Heart left ventricle (tissue), 16 donors: ENCODE measurements at regions of chr4 and their contacts with region 1.

Region 1: DNA sequence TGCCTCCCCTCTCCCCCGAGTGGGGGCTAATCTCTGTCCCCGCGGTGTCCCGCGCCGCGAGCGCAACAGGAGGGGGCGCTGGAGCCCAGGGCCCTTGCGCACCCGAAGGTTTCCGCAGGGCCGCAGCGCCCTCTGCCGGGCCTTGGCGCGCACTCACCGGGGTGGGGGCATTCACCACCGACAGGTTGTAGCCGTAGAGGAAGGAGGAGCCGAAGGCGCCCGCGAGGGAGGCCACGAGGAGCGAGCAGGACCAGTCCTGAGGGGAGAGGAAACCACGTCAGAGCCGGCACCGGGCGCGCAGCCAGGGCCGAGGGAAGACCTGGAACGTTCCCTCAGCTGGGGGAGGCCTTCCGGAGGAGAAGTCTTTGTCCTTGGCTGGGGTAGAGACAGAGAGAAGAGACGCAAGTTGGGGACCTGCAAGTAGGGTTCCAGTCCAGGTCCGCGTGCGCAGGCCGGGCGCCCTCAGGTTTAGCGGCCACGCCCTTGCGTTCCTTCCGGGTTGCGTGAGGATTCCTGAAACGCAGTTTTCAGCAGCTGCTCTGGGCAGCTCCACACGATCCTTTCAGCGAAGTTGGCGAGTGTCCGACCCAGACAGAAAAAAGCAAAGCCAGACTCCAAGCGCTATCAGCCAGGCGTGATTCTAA is 2.4 kb downstream of the SLC2A9 start:
- DNase-seq: peak; percentile 99
- ATAC-seq: peak; percentile 93 to 96 (median 96)
- H3K4me3 ChIP-seq: peak overlapping the region in 10 of 12 donors; percentile 38 to 61 (median 50)
- H3K27ac ChIP-seq: peak overlapping the region; percentile 84 to 95 (median 93)
- H3K4me1 ChIP-seq: peaks cover 5 to 57% (median 39%) of the 10 kb centered on the region in 12 donors
- H3K27me3 ChIP-seq: no peaks in the 10 kb centered on the region
- CTCF ChIP-seq: peak; percentile 96 to 100 (median 99)
- POLR2A ChIP-seq: peak; percentile 7 to 60

Region 2: DNA sequence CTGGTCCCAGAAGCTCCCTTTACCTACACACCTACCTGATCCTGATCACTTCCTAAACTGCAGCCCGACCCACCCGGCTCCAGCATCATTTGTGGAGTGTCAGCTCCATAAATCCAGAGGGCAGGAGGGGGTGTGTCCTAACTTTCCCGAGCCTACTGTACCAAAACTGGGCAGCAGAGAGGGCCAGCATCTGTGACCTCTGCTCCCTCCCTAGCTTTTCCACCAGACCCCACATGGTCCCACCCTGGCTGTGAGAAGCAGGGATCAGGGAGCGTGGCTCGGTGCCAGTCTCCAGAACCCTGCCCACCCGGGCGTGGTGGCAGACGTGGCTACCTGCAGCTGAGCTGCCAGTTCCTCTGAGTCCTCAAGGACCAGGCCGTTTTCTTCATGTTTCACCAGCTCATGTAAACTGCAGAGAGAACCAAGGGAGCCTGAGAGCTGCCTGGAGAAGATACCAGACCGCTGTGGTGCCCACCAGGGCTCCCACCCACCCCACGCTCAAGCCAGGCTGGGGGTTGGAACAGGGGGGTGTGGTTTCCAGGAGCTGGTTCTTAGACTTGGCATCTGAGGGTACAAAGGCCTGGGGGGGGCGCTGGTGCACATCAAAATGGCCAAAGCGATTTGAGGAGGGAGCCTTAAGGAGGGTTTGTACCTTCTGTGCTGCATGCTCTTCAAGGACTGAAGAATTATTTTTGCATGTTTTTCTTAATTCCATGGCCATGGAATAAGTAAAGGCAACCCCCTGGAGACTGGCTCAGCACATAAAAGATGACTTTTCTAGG is 314.2 kb before region 1 on chr4:
- intact Hi-C with region 1: loop called in 5 of 10 experiments (anchors 5 to 10 kb)
- DNase-seq: no peak
- ATAC-seq: no peak
- H3K4me3 ChIP-seq: no peak overlapping the region
- H3K27ac ChIP-seq: no peak overlapping the region
- H3K4me1 ChIP-seq: no peaks in the 10 kb centered on the region
- H3K27me3 ChIP-seq: peaks cover 0 to 4% (median 0%) of the 10 kb centered on the region in 9 donors
- CTCF ChIP-seq: no peak
- POLR2A ChIP-seq: no peak

Region 3: DNA sequence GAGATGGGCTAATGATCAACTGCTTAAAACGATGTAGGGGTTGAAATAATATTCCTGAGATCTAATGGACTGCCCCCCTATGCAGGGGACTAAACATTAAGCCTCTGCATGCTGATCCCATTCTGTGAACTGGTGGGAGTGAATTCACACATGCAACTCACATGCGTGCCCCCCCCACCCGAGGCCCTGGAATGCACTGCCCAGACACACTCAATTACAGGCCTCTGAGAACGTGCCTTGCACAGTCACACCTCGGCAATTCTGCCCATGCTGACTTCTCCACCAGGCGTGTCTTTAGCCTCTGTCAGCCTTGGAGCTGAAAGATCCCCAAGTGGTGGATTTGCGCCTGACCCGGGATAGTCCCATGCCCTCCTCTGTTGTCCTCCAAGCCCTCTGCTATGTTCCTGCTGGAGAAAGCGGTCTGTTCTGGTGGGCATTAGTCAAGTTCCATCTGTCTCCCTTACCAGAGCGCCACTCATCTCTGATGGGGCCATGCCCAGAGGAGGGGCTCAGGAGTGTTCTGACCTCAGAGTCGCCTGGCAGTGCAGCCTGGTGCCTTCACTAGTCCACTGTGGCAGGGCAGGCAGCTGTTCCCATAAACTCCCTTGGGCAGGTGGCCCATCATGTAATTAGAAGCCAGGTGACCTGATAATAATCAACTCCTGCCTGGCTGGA is 151.1 kb before region 1 on chr4:
- intact Hi-C with region 1: no loop called
- DNase-seq: no peak
- ATAC-seq: peak in 1 of 4 donors; percentile 27
- H3K4me3 ChIP-seq: no peak overlapping the region
- H3K27ac ChIP-seq: no peak overlapping the region
- H3K4me1 ChIP-seq: no peaks in the 10 kb centered on the region
- H3K27me3 ChIP-seq: no peaks in the 10 kb centered on the region
- CTCF ChIP-seq: no peak
- POLR2A ChIP-seq: no peak

Region 4: GRCh38 chr4:9904976-9905587 is 113.9 kb before region 1 on chr4:
- intact Hi-C with region 1: loop called in 1 of 10 experiments (anchors 10 kb)
- DNase-seq: peak in 1 of 5 donors; percentile 58
- ATAC-seq: peak; percentile 10 to 59 (median 36)
- H3K4me3 ChIP-seq: no peak overlapping the region
- H3K27ac ChIP-seq: no peak overlapping the region
- H3K4me1 ChIP-seq: peaks cover 0 to 11% (median 0%) of the 10 kb centered on the region in 12 donors
- H3K27me3 ChIP-seq: no peaks in the 10 kb centered on the region
- CTCF ChIP-seq: no peak
- POLR2A ChIP-seq: no peak

Region 5: GRCh38 chr4:10063544-10064300 is 44.8 kb after region 1 on chr4:
- intact Hi-C with region 1: loop called (anchors 1 to 5 kb)
- DNase-seq: peak; percentile 68 to 78 (median 69)
- ATAC-seq: peak; percentile 93 to 99 (median 98)
- H3K4me3 ChIP-seq: no peak overlapping the region
- H3K27ac ChIP-seq: peak overlapping the region in 6 of 12 donors; percentile 25 to 59 (median 48)
- H3K4me1 ChIP-seq: peaks cover 0 to 17% (median 9%) of the 10 kb centered on the region in 12 donors
- H3K27me3 ChIP-seq: no peaks in the 10 kb centered on the region
- CTCF ChIP-seq: peak; percentile 67 to 86 (median 78)
- POLR2A ChIP-seq: no peak

Region 6: DNA sequence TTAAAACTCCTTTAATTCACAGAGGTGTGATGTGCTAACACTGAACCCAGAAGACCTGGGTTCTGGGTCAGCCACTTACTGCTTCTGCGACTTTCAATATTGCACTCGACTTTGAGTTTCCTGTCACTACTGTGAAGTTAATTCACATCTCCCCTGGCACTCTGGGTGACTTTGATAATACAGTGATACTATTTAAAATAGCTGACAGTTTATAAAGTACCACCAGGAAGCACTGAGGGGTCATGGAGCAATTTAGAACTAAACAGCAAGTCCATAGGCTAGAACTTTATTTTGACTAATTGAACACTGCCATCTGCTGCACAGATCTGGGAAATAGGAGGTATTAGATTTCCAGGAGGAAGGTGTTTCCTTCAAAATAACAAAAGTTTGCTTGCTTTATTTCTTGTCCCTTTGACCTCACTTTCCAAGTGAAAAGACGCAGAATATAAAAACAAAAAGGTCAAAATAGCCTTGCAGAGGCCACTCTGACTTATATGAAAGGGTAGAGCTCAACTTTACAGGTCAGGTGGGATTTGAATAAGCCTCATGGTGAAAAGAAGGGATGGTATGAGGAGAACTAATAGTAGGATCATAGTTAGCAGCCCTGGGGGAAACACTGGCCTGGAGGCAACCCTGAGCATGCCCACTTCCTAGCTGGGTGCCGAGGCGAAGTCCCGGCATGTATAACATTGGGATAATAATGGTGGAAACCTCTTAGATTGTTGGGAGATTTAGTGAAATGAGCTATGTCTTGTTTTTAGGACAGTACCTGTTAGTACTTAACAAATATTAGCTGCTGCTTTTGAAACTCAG is 384.9 kb after region 1 on chr4:
- intact Hi-C with region 1: loop called in 2 of 10 experiments (anchors 5 kb)
- DNase-seq: no peak
- ATAC-seq: peak; percentile 37 to 64 (median 46)
- H3K4me3 ChIP-seq: no peak overlapping the region
- H3K27ac ChIP-seq: no peak overlapping the region
- H3K4me1 ChIP-seq: peaks cover 0 to 4% (median 0%) of the 10 kb centered on the region in 12 donors
- H3K27me3 ChIP-seq: no peaks in the 10 kb centered on the region
- CTCF ChIP-seq: peak; percentile 24 to 65 (median 52)
- POLR2A ChIP-seq: no peak